ENCODE measurements at regions of chr21 and their contacts with region 1.

Region 1: GRCh38 chr21:32278518-32279376 is at the start of gene MIS18A:
- DNase-seq: peak; percentile 94 to 97 (median 95)
- H3K4me3 ChIP-seq: peak within 1 kb of the TSS; percentile 73 to 84
- H3K4me3 Mint-ChIP-seq: peak within 1 kb of the TSS; percentile 96 to 100 (median 99)
- H3K27ac ChIP-seq: peak within 1 kb of the TSS; percentile 67
- H3K27ac Mint-ChIP-seq: peak within 1 kb of the TSS; percentile 93 to 98 (median 96)
- H3K4me1 ChIP-seq: peaks cover 23% of the 10 kb centered on the region
- H3K4me1 Mint-ChIP-seq: peaks cover 17 to 36% (median 27%) of the 10 kb centered on the region in 4 donors
- H3K27me3 ChIP-seq: no peaks in the 10 kb centered on the region
- H3K27me3 Mint-ChIP-seq: no peaks in the 10 kb centered on the region
- total RNA-seq, gene MIS18A: 6.7 to 9.5 TPM

Region 2: GRCh38 chr21:31731802-31732596 is 546.7 kb before region 1 on chr21 and contains the start of gene SCAF4:
- CTCF ChIA-PET with region 1: no interaction called
- POLR2A ChIA-PET with region 1: no interaction called
- intact Hi-C with region 1: loop called (anchors 2 kb)
- DNase-seq: peak; percentile 73 to 80 (median 76)
- H3K4me3 ChIP-seq: peak within 1 kb of the TSS; percentile 67 to 89
- H3K4me3 Mint-ChIP-seq: peak within 1 kb of the TSS; percentile 24 to 94 (median 90)
- H3K27ac ChIP-seq: peak within 1 kb of the TSS; percentile 82
- H3K27ac Mint-ChIP-seq: peak within 1 kb of the TSS; percentile 54 to 94 (median 88)
- H3K4me1 ChIP-seq: peaks cover 50% of the 10 kb centered on the region
- H3K4me1 Mint-ChIP-seq: peaks cover 4 to 18% (median 9%) of the 10 kb centered on the region in 4 donors
- H3K27me3 ChIP-seq: no peaks in the 10 kb centered on the region
- H3K27me3 Mint-ChIP-seq: no peaks in the 10 kb centered on the region
- total RNA-seq, gene SCAF4: 60.2 to 64.7 TPM

Region 3: GRCh38 chr21:32300117-32300681 is 21.5 kb after region 1 on chr21:
- CTCF ChIA-PET with region 1: no interaction called
- POLR2A ChIA-PET with region 1: no interaction called
- intact Hi-C with region 1: no loop called
- DNase-seq: no peak
- H3K4me3 ChIP-seq: no peak overlapping the region
- H3K4me3 Mint-ChIP-seq: no peak overlapping the region
- H3K27ac ChIP-seq: no peak overlapping the region
- H3K27ac Mint-ChIP-seq: no peak overlapping the region
- H3K4me1 ChIP-seq: no peaks in the 10 kb centered on the region
- H3K4me1 Mint-ChIP-seq: no peaks in the 10 kb centered on the region
- H3K27me3 ChIP-seq: no peaks in the 10 kb centered on the region
- H3K27me3 Mint-ChIP-seq: no peaks in the 10 kb centered on the region

Region 4: GRCh38 chr21:32412162-32413014 is 133.6 kb after region 1 on chr21 and contains the start of gene EVA1C:
- CTCF ChIA-PET with region 1: no interaction called
- POLR2A ChIA-PET with region 1: interaction called, 4 read pairs
- intact Hi-C with region 1: loop called (anchors 2 kb)
- DNase-seq: peak; percentile 81 to 87 (median 85)
- H3K4me3 ChIP-seq: peak within 1 kb of the TSS; percentile 40 to 83
- H3K4me3 Mint-ChIP-seq: peak within 1 kb of the TSS; percentile 94 to 98 (median 96)
- H3K27ac ChIP-seq: peak within 1 kb of the TSS; percentile 86
- H3K27ac Mint-ChIP-seq: peak within 1 kb of the TSS; percentile 95 to 99 (median 97)
- H3K4me1 ChIP-seq: peaks cover 34% of the 10 kb centered on the region
- H3K4me1 Mint-ChIP-seq: peaks cover 32 to 71% (median 43%) of the 10 kb centered on the region in 4 donors
- H3K27me3 ChIP-seq: no peaks in the 10 kb centered on the region
- H3K27me3 Mint-ChIP-seq: no peaks in the 10 kb centered on the region
- total RNA-seq, gene EVA1C: 17.1 to 17.2 TPM

Region 5: GRCh38 chr21:32612075-32612998 is 333.6 kb after region 1 on chr21 and contains the start of gene CFAP298:
- CTCF ChIA-PET with region 1: no interaction called
- POLR2A ChIA-PET with region 1: interaction called, 8 read pairs
- intact Hi-C with region 1: loop called (anchors 5 kb)
- DNase-seq: peak; percentile 90 to 97 (median 92)
- H3K4me3 ChIP-seq: peak within 1 kb of the TSS; percentile 95 to 99
- H3K4me3 Mint-ChIP-seq: peak within 1 kb of the TSS; percentile 91 to 98 (median 96)
- H3K27ac ChIP-seq: peak within 1 kb of the TSS; percentile 86
- H3K27ac Mint-ChIP-seq: peak within 1 kb of the TSS; percentile 98 to 99 (median 99)
- H3K4me1 ChIP-seq: peaks cover 12% of the 10 kb centered on the region
- H3K4me1 Mint-ChIP-seq: peaks cover 8 to 32% (median 20%) of the 10 kb centered on the region in 4 donors
- H3K27me3 ChIP-seq: no peaks in the 10 kb centered on the region
- H3K27me3 Mint-ChIP-seq: peaks cover 1 to 2% of the 10 kb centered on the region in 2 donors
- total RNA-seq, gene CFAP298: 29.4 to 39.1 TPM